ENCODE measurements at regions of chr6 and their contacts with region 1.

Region 1: GRCh38 chr6:131038597-131039344 is 24.3 kb downstream of the EPB41L2 start:
- DNase-seq: no peak
- ATAC-seq: no peak

Region 2: DNA sequence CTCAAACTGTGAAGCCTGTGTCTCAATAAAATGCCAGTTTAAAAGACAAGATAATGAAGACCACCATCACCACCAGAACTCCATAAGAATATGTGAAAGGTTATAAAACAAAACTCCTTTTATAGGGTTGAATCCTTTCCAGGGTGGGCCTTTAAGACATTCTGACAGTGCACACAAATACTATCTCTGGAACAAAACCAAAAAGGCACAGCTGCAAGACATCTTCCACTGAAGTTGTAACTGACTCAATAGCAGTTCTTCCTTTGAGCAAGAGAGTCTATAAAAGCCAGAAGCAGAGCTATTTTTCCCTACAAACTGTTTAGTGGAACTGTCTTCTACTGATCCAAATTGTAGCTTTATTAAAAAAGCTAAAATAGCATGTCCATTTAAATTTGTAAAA is 57.4 kb before region 1 on chr6:
- intact Hi-C with region 1: no loop called
- DNase-seq: no peak
- ATAC-seq: no peak

Region 3: GRCh38 chr6:131001111-131001736 is 37.5 kb before region 1 on chr6:
- intact Hi-C with region 1: loop called in 1 of 2 experiments (anchors 5 kb)
- DNase-seq: no peak
- ATAC-seq: no peak